ENCODE measurements at regions of chr18 and their contacts with region 1.

Region 1: GRCh38 chr18:46054956-46055837 is 16.9 kb downstream of the PSTPIP2 start:
- DNase-seq: peak; percentile 40
- H3K4me3 Mint-ChIP-seq: no peak overlapping the region
- H3K27ac Mint-ChIP-seq: peak overlapping the region; percentile 44
- H3K4me1 Mint-ChIP-seq: peaks cover 41% of the 10 kb centered on the region
- H3K27me3 Mint-ChIP-seq: no peaks in the 10 kb centered on the region

Region 2: DNA sequence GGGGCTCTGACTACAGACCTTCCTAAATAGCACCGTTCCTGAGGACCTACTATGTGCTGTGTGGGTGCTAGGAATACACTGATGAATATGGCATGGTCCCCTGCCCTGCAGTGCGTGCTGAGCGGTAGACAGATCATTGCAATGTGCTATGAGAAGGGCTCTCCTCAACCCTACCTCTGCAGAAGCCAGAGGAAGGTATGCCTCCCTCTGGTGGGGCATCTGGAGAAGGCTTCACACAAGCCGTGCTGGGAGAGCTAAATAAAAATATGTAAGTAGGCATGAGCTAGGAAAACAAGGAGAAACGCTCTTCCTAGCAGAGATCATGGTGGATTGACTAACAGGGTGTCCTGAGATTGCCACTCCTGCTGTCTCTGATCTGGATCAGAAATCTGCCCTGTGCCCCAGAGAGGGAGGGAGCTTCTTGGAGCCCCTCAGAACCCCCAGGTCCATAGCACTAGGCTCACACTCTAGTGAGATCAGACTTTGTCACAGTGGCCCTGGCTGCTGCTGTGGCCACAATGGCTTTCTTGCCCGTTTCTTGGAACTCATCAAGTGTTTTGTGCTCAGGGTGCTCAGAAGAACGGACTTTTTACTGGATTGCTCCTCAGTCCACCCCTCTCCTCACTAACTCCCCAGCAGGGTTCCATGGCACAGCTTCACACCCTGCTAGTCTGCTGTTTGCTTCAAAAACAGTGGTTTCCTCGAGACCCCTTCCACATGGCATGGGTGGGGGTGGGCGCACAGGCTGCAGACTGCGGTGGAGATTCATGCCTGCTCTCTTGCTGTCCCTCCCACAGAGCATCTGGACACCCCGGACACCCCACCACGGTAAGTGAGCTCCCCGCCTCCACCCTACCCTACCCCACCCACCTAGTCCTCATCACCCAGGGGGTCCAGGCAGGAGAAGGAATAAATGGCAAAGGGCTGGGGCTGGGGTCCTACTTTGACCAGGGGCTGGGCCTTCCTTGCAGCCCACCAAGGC is 215.5 kb before region 1 on chr18:
- CTCF ChIA-PET with region 1: no interaction called
- intact Hi-C with region 1: no loop called
- DNase-seq: peak; percentile 49
- H3K4me3 Mint-ChIP-seq: no peak overlapping the region
- H3K27ac Mint-ChIP-seq: no peak overlapping the region
- H3K4me1 Mint-ChIP-seq: peaks cover 11% of the 10 kb centered on the region
- H3K27me3 Mint-ChIP-seq: peaks cover 28% of the 10 kb centered on the region

Region 3: GRCh38 chr18:45997700-45998151 is 57.5 kb before region 1 on chr18:
- CTCF ChIA-PET with region 1: no interaction called
- intact Hi-C with region 1: loop called (anchors 1 kb)
- DNase-seq: peak; percentile 45
- H3K4me3 Mint-ChIP-seq: peak overlapping the region; percentile 73
- H3K27ac Mint-ChIP-seq: peak overlapping the region; percentile 88
- H3K4me1 Mint-ChIP-seq: peaks cover 39% of the 10 kb centered on the region
- H3K27me3 Mint-ChIP-seq: no peaks in the 10 kb centered on the region

Region 4: DNA sequence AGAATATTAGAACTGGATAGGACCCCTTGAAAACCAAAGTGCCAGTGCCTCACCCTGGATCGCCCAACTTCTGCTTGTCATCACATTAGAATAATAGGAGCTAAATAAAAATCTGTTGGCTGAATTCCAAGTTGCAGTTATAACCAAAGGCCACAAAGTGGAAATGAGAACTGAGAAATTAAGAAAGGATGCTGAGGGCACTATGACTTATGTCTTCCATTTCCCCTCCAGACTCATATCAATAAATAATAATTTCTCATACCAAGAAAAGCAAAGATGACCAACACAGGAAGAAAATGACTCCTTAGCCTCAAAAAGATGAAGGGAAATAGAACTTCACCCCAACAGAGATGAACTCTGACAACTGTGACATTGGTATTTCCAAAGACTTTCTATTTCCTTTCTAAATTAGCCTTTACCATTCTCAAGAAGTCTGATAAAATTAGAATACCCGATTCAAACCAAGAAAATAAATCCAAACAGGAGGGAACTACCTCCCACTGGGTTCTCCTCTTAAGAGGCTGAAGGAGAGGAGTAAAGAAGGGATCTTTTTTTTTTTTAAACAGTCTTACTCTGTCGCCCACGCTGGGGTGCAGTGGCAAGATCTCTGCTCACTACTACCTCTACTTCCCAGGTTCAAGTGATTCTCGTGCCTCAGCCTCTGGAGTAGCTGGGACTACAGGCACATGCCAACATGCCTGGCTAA is 41.6 kb before region 1 on chr18:
- CTCF ChIA-PET with region 1: interaction called, 5 read pairs
- intact Hi-C with region 1: loop called (anchors 1 kb)
- DNase-seq: no peak
- H3K4me3 Mint-ChIP-seq: no peak overlapping the region
- H3K27ac Mint-ChIP-seq: no peak overlapping the region
- H3K4me1 Mint-ChIP-seq: peaks cover 13% of the 10 kb centered on the region
- H3K27me3 Mint-ChIP-seq: no peaks in the 10 kb centered on the region

Region 5: DNA sequence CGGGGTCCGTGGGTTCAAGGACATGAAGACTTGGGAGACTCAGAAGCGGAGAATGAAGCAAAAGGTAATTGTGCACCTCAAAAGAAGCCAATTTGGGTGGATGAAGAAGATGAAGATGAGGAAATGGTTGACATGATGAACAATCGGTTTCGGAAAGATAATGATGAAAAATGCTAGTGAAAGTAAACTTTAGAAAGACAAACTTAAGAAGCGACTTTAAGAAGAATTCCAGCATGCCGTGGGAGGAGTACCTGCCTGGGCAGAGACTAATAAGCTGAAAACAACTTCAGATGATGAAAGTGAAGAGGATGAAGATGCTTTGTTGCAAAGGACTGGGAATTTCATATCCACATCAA is 26.7 kb before region 1 on chr18:
- CTCF ChIA-PET with region 1: interaction called, 3 read pairs
- intact Hi-C with region 1: loop called (anchors 1 kb)
- DNase-seq: no peak
- H3K4me3 Mint-ChIP-seq: peak overlapping the region; percentile 81
- H3K27ac Mint-ChIP-seq: peak overlapping the region; percentile 78
- H3K4me1 Mint-ChIP-seq: peaks cover 14% of the 10 kb centered on the region
- H3K27me3 Mint-ChIP-seq: peaks cover 6% of the 10 kb centered on the region

Region 6: GRCh38 chr18:46042571-46043123 is 12.6 kb before region 1 on chr18:
- CTCF ChIA-PET with region 1: interaction called, 3 read pairs
- intact Hi-C with region 1: loop called (anchors 1 kb)
- DNase-seq: peak; percentile 58
- H3K4me3 Mint-ChIP-seq: no peak overlapping the region
- H3K27ac Mint-ChIP-seq: peak overlapping the region; percentile 65
- H3K4me1 Mint-ChIP-seq: peaks cover 43% of the 10 kb centered on the region
- H3K27me3 Mint-ChIP-seq: no peaks in the 10 kb centered on the region

Region 7: DNA sequence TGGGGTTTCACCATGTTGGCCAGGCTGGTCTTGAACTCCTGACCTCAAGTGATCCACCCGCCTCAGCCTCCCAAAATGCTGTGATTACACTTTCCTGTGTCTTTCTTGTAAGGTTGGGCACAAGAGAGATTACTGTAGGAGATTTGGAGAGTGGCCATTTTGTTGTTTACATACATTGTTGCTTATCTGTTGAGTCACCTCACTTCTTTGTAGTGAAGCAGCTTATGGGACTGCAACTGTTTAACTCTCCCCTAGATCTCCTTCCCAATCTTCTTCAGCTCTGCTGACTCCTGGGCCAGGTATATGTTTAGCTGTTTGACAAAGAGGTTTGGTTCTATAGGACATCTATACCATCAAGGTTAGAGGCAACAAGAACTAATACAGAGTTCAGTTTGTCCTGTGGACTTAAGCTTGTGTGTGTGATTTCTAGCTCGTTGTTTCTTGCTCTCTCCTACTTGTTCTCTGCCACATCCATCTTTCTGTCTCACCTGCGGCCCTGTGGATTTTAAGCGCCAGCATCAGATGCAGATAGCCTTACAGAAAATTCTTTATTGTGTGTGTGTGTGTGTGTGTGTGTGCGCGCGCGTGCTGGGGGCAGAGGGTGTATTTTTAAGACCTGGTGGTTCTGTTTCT is 144.4 kb after region 1 on chr18:
- CTCF ChIA-PET with region 1: no interaction called
- intact Hi-C with region 1: no loop called
- DNase-seq: no peak
- H3K4me3 Mint-ChIP-seq: no peak overlapping the region
- H3K27ac Mint-ChIP-seq: peak overlapping the region; percentile 0
- H3K4me1 Mint-ChIP-seq: peaks cover 67% of the 10 kb centered on the region
- H3K27me3 Mint-ChIP-seq: no peaks in the 10 kb centered on the region